Tibial artery (tissue), 4 donors: ENCODE measurements at regions of chr2 and their contacts with region 1.

Region 1: DNA sequence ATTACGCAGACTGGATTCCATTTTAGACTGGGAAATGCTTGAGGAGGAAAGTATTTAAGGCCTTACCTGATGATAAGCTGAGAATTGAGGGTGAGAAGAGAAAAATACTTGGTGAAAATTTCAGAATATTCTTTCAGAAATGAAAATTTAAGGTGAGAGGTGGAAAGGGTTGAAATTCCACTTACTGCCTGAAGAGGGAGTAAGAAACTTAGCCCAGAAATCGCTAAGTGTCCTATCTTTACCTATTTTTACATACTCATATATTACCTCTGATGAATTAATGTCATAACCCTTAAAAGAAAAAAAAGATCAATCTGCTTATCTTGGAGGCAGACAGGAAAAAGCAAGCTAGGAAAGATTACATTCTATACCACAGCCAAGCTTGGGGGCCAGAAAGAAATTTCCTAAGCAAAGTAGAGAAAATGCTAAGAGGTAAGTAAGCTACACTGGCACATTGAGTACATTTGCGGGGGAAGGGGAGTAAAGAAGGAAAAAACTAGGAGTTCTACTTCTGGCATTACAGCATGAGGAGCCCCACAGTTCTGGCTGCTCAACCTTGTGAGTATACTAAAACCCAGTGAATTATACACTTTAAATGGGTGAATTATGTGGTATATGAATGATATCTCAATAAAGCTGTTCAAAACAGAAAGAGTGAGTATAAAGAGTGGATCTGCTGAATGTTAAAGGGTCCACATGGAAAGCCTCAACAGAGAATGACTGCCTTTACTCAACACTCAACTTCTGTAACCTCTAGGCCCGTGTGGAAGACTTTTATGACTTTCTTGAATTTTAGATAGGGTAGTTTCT is 33.8 kb downstream of the SMC6 start:
- DNase-seq: no peak
- H3K4me3 ChIP-seq: no peak overlapping the region
- H3K27ac ChIP-seq: no peak overlapping the region
- H3K4me1 ChIP-seq: no peaks in the 10 kb centered on the region
- H3K27me3 ChIP-seq: no peaks in the 10 kb centered on the region
- CTCF ChIP-seq: peak; percentile 59 to 71

Region 2: DNA sequence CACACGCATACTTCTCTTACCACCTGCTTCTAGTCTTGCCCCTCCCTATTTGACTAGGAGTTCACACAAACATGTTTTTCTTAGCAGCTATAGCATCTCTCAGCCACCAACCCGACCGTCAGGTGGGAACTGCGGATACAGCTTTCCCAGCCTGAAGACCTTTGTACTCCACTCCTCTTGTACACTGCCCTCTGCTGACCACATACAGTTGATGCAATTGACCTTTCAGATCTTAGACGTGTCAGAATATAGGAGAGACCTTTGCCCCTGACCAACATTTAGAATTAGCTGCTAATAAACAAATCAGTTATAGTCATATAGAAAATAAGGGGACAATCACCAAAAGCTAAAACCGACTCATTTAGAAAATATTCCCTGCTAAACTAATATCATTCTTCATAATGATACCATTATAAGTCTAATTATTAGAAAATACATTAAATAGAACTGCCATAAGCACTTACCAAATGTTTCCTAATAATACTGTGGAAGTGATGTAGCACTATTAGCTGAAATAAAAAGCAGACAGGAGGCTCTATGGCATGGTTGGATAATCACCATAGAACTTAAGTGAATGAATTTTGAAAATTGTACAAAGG is 409.9 kb before region 1 on chr2:
- intact Hi-C with region 1: no loop called
- DNase-seq: no peak
- H3K4me3 ChIP-seq: no peak overlapping the region
- H3K27ac ChIP-seq: no peak overlapping the region
- H3K4me1 ChIP-seq: no peaks in the 10 kb centered on the region
- H3K27me3 ChIP-seq: no peaks in the 10 kb centered on the region
- CTCF ChIP-seq: peak in 1 of 2 experiments; percentile 17

Region 3: GRCh38 chr2:17780546-17780945 is 60.8 kb after region 1 on chr2:
- intact Hi-C with region 1: no loop called
- DNase-seq: no peak
- H3K4me3 ChIP-seq: no peak overlapping the region
- H3K27ac ChIP-seq: no peak overlapping the region
- H3K4me1 ChIP-seq: no peaks in the 10 kb centered on the region
- H3K27me3 ChIP-seq: no peaks in the 10 kb centered on the region
- CTCF ChIP-seq: no peak

Region 4: DNA sequence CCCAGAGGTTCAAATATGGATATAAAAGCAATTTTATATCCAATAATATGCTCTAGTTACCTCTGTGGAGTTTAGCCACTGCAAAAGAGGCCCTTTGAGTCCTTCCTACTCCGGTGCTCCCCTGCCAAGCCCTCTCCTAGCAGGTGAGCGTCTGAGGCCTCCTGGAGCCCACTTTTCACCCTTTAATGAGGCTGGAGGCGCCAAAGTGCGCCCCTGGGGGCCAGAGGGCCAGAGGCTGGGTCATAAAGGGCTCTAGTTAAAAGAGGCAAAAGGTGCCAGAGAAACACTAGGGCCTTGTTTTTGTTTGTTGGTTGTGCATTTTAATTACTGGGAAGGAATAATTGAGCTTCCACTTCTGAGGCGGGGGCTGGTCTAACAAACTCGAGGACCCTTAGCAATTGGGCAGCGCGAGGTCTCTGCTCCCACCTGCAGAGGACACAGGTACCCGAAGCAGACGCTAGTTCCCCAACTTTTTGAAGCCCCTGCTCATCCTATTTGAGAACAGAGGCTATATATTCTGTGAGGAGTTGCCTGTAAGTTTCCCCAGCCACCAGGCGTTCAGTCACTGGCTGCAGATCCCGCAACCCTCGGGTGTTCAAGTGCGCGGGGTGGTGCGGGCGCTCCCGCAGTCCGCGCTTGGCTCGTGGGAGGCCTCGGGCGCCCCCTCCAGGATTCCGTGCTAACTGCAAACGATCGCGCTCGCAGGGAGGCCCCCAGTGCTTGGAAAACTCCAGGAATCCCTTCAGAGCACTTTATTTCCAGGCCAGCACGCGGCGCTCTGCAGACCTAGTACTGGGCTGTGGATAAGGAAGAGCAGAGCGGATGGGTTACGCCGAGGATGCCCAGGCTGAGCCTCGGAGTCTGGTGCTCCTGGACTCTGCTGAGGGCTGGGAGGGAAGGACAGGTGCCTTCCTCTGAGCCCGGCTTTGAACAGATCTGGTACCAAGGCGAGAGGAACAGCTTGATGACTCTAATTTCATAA is 110.6 kb after region 1 on chr2:
- intact Hi-C with region 1: loop called (anchors 10 kb)
- DNase-seq: peak in 1 of 2 donors; percentile 23
- H3K4me3 ChIP-seq: no peak overlapping the region
- H3K27ac ChIP-seq: no peak overlapping the region
- H3K4me1 ChIP-seq: peaks cover 0 to 9% (median 7%) of the 10 kb centered on the region in 4 donors
- H3K27me3 ChIP-seq: peaks cover 0 to 15% of the 10 kb centered on the region in 2 donors
- CTCF ChIP-seq: peak; percentile 51 to 70

Region 5: DNA sequence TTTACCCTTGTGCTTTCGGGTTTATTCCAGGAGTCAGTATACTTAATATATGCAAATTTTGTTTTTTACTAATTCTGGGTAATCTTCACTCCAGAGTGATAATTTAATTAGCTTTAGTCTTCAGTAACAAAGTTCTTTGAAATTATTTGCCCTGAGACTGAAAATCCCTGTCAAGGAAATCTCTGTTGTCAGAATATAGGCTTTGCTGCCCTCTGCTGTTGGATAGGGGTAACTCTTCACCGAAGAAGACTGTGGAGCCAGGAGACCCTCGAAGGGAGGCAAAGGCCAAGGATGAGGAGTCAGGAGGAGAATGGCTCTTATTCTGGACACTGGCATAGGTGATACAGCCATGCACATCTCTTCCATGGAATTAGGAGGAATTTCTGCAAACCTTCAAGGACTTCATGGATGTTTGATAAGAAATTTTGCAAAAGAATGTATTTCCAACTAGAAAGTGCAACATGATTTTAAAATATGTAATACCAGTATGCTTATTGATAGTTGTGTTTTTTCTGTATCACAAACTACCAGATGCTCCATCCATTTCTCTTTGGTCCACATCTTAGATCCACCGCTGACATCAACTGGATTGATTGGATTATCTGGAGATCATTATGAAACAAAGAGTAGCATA is 658.4 kb after region 1 on chr2:
- intact Hi-C with region 1: loop called (anchors 10 kb)
- DNase-seq: no peak
- H3K4me3 ChIP-seq: no peak overlapping the region
- H3K27ac ChIP-seq: no peak overlapping the region
- H3K4me1 ChIP-seq: peaks cover 0 to 11% (median 0%) of the 10 kb centered on the region in 4 donors
- H3K27me3 ChIP-seq: no peaks in the 10 kb centered on the region
- CTCF ChIP-seq: peak; percentile 70 to 72